Cardiac septum (tissue), 1 donor: ENCODE measurements at regions of chr11 and their contacts with region 1.

Region 1: DNA sequence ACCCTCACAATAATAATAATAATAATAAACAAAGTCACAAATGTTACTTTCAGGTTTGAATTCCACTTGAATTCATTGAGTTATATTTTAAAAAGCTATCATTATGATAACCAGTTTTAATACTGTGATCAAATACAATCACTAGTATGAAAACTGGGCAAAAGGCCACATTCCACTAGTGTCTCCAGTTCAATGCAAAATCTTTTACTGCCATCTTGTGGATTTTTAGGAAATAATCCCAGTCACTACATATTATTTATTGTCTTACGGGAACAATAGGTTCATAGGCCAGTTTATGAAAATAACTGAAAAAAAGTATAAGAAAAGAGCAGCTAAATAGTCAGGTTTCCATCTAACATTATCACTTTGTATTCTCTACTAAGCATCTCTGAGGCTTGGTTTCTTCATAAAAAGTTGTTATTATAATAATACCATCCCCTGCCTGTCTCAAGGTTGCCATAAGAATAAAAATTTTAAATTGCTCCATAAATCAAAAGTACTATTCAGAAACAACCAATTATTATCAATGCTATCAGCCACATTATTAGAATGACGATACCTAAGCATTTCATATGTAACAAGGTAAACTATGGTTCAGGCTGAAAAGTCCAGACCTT is 533.9 kb upstream of the CCDC90B start:
- DNase-seq: no peak

Region 2: GRCh38 chr11:82682003-82682751 is 1137.9 kb before region 1 on chr11:
- intact Hi-C with region 1: loop called (anchors 10 kb)
- DNase-seq: no peak

Region 3: DNA sequence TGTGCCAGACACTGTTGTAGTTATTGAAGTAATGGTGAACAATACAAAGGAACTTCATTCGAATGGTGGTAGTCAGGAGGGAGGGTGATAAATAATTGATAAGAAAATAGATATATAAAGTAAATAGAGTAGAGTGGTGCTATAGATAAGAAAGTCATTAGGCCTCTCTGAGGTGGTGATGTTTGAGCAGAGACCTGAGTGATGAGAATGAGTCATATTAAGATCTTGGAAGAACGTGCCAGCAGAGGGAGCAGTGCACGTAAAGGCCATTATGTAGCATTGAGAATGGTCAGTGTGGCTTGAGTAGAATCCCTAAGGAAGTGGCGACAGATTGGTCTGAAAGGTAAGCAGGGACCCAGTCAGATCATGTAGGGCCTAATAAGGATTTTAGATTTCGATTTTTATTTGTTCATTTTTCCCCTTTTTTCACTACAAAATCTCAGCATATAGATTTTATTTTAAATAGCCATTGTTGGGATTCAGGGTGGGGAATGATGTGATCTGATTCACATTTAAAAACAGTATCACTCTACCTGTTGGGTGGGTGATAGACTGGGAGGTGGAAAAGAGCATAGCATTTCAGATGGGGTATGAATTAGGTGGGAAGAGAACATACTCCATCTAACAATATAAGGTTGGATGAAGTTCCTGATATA is 578.6 kb before region 1 on chr11:
- intact Hi-C with region 1: loop called (anchors 10 kb)
- DNase-seq: no peak

Region 4: GRCh38 chr11:83292709-83293456 is 527.2 kb before region 1 on chr11:
- intact Hi-C with region 1: loop called (anchors 5 kb)
- DNase-seq: no peak

Region 5: DNA sequence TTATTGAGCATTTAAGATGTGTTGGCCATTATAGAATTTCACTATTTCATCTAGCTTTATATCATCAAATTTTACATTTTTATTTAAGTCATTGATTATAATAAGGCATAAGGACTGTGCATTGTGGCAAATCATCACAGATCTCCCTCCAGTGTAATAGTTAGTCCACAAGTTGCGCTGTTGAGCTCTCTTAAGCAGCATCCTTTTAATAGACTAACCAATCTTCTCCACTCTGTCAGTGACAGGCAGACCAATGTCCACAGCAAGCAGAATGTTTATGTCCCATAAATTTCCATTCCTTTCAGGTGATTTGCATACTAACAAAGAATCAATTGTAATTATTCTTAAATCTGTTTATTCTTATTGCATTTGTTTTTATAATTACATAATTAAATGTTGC is 61.4 kb after region 1 on chr11:
- intact Hi-C with region 1: no loop called
- DNase-seq: no peak

Region 6: DNA sequence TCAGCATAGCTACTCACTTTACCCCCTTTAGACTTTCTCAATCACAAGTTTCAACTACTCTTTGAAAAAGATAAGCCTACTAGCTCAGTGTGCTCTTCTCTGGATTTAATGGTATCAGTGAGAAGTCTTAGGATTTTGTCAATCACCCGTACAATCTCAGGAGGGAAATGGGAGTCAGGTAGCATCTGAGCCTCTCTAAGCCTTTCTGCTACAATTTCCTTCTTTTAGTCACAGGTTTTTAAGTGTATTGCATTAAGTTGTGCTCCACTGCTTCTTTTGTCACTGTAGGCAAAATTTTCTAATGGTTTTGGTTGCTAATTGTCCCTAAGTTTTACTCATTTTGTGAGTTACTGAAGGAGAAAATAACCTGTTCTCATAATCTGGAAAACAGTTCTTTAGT is 224.7 kb after region 1 on chr11:
- intact Hi-C with region 1: no loop called
- DNase-seq: no peak